HAP-1 (cell line): ENCODE measurements at regions of chr3 and their contacts with region 1.

Region 1: DNA sequence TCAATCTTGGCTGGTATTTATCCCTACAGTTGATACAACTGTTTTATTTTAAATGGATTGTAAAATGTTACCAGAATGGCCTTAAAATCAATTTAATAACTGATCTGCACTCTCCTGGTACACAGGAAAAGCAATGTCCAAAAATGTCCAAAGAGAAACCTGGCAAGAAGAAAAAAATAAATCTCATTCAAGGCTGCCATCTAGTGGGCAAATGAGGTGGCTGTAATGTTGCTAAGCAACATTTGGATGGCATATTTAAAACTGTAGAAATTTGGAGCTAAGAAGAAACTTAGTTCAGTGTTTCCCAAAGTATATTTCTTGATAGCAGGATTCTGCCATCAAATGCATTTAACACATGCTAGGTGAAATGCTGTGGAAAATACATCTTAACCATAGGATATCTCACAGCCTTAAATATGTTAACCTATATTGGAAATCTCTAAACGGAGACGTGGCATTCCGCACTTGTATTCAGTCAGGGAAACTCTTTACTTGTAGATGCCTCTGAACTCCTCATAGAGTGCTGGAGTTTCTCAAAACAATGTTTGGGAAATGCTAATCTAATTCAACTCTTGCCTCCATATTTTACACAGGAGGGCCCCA is 216.8 kb downstream of the ERC2 start:
- DNase-seq: peak; percentile 25 to 60
- H3K4me3 ChIP-seq: no peak overlapping the region
- H3K4me1 ChIP-seq: no peaks in the 10 kb centered on the region
- H3K27me3 ChIP-seq: no peaks in the 10 kb centered on the region

Region 2: DNA sequence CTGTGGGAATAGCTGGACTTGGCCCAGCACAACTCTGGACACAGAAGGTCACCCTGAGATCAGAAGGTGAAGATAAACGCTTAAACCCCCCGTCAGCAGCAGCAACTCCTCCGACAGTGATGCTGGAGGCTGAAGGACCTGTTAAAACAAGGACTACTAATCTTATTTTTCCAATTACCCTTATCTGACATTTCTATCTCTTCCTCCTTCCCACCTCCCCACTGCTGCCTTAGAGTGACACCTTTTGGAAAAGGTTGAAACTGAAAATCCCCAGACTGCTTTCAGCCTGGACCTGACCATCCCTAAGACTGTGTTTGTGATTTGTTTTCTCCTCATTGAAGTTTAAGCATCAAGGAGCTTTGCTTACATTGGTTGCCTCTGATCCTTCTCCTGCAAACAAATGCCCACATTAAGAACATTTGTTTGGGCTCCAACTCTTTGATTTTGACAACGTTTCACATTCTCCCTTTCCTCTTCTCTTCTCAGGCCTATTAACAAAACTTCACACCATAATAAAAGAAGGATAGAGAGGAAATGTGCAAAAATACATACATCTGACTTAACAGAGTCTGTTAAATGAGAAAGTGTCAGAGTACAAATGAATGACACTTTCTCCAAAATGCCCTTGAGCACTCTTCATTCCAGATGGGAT is 353.7 kb before region 1 on chr3:
- in situ Hi-C with region 1: loop called (anchors 25 kb)
- DNase-seq: peak; percentile 47 to 56
- H3K4me3 ChIP-seq: no peak overlapping the region
- H3K4me1 ChIP-seq: peaks cover 3% of the 10 kb centered on the region; the same call in 1 of the 2 replicates
- H3K27me3 ChIP-seq: no peaks in the 10 kb centered on the region